Panc1 (cell line): ENCODE measurements at regions of chr5 and their contacts with region 1.

Region 1: DNA sequence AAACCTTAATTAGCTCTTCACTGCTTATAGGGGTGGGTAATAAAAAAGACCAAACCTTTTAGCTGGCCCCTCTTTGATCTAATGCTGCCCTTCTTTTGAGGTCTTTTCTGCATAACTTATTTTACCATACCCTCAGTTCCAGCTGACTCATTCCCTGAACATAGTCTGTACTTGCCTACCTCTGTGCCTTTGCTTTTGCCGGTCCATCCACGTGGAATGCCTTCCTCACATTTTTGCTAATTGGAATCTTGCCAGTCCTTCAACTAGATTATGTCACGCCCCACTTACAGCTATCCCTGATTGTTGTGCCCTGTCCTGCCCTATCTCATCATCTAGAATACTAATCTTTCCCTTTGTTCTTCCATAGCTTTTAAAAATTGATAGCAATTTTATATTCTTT is 44.2 kb downstream of the FAF2 start:
- DNase-seq: no peak
- ATAC-seq: no peak
- H3K4me3 ChIP-seq: no peak overlapping the region
- H3K27ac ChIP-seq: peak overlapping the region; percentile 63; the same call in 1 of the 2 replicates
- H3K4me1 ChIP-seq: peaks cover 14% of the 10 kb centered on the region
- H3K27me3 ChIP-seq: no peaks in the 10 kb centered on the region
- CTCF ChIP-seq: no peak

Region 2: GRCh38 chr5:176415952-176416924 is 76.2 kb before region 1 on chr5 and contains the start of gene CLTB:
- CTCF ChIA-PET with region 1: no interaction called
- POLR2A ChIA-PET with region 1: no interaction called
- in situ Hi-C with region 1: no loop called
- intact Hi-C with region 1: loop called (anchors 10 kb)
- DNase-seq: no peak
- ATAC-seq: peak; percentile 98
- H3K4me3 ChIP-seq: peak within 1 kb of the TSS; percentile 81 to 86
- H3K27ac ChIP-seq: peak within 1 kb of the TSS; percentile 81
- H3K4me1 ChIP-seq: peaks cover 16% of the 10 kb centered on the region; the same call in 1 of the 2 replicates
- H3K27me3 ChIP-seq: no peaks in the 10 kb centered on the region
- CTCF ChIP-seq: peak; percentile 99
- total RNA-seq, gene CLTB: 124 TPM

Region 3: GRCh38 chr5:176803068-176803939 is 310.9 kb after region 1 on chr5:
- CTCF ChIA-PET with region 1: no interaction called
- POLR2A ChIA-PET with region 1: no interaction called
- in situ Hi-C with region 1: no loop called
- intact Hi-C with region 1: no loop called
- DNase-seq: no peak
- ATAC-seq: no peak
- H3K4me3 ChIP-seq: no peak overlapping the region
- H3K27ac ChIP-seq: no peak overlapping the region
- H3K4me1 ChIP-seq: no peaks in the 10 kb centered on the region
- H3K27me3 ChIP-seq: peaks cover 10% of the 10 kb centered on the region
- CTCF ChIP-seq: no peak